CD8-positive, alpha-beta T cell (primary cell): ENCODE measurements at regions of chr1 and their contacts with region 1.

Region 1: DNA sequence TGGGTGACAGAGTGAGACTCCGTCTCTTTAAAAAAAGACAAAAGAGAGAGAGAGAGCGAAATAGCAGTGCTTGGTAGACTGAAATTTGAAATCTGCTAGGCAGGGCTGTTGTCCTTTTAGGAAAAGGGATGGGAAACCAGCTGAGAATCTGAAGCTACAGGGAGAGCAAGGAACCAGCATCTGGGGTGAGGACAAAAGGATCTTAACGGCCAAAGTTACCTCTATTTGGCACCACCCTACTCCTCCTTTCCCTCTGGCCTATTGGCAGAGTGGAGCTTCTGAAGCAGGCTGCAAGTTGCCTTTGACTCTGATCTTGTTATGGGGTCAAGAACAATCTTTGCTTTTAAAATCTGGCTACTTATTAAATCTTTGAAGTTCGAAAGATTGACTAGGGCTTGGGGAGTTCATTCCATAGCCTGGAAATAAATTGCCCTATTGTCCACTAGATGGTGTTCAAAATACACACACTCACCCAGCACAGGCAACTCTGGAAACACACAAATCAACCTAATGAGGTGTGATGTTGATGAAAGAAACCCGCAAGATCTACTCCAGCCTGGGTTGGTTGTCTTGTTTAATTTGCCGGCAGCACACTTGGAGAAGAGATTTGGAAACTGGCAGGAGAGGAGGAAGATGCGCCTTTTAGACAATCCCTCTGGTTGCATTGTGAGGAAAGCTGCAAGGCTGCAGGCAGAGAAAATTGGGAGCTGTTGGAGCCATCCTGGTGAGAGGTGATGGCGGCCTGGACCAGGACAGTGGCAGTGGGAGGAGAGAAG is 16.5 kb upstream of the PARP1 start:
- DNase-seq: peak in 3 of 9 experiments; percentile 21 to 75 (median 59)
- ATAC-seq: peak; percentile 54
- H3K4me3 ChIP-seq: no peak overlapping the region
- H3K4me3 Mint-ChIP-seq: no peak overlapping the region
- H3K27ac ChIP-seq: peak overlapping the region in 1 of 2 experiments; percentile 47
- H3K27ac Mint-ChIP-seq: no peak overlapping the region
- H3K4me1 ChIP-seq: peaks cover 27% of the 10 kb centered on the region
- H3K4me1 Mint-ChIP-seq: peaks cover 35% of the 10 kb centered on the region
- H3K27me3 ChIP-seq: no peaks in the 10 kb centered on the region
- H3K27me3 Mint-ChIP-seq: no peaks in the 10 kb centered on the region
- CTCF ChIP-seq: peak; percentile 47

Region 2: DNA sequence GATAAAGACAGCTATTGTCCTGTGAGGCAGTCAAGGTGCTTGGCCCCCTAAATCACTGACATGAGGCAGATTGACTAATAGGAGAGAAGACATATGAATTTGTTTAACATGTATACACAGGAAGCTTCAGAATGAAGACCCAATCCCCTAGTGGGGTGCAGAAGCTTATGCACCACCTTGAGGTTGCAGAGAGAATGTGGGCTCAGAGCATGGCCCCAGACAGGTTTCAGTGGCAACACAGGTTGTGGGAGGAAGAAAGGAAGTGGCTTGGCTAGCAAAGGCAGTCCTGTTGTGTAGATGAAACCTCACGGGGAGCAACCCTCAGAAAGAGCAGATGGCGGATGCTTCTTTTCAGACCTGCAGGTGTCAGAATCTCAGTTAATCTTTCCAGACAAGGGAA is 20.5 kb after region 1 on chr1:
- CTCF ChIA-PET with region 1: interaction called, 43 read pairs
- POLR2A ChIA-PET with region 1: interaction called, 17 read pairs
- intact Hi-C with region 1: loop called (anchors 1 to 2 kb)
- DNase-seq: peak; percentile 35 to 88 (median 68)
- ATAC-seq: peak; percentile 99
- H3K4me3 ChIP-seq: no peak overlapping the region
- H3K4me3 Mint-ChIP-seq: peak overlapping the region; percentile 12
- H3K27ac ChIP-seq: peak overlapping the region in 1 of 2 experiments; percentile 7
- H3K27ac Mint-ChIP-seq: peak overlapping the region; percentile 80
- H3K4me1 ChIP-seq: peaks cover 34% of the 10 kb centered on the region
- H3K4me1 Mint-ChIP-seq: peaks cover 35% of the 10 kb centered on the region
- H3K27me3 ChIP-seq: no peaks in the 10 kb centered on the region
- H3K27me3 Mint-ChIP-seq: no peaks in the 10 kb centered on the region
- CTCF ChIP-seq: peak; percentile 44

Region 3: GRCh38 chr1:226457307-226457712 is 32.9 kb after region 1 on chr1:
- CTCF ChIA-PET with region 1: interaction called, 14 read pairs
- POLR2A ChIA-PET with region 1: interaction called, 6 read pairs
- intact Hi-C with region 1: no loop called
- DNase-seq: peak; percentile 9 to 79 (median 60)
- ATAC-seq: peak; percentile 89
- H3K4me3 ChIP-seq: peak overlapping the region; percentile 25 to 56
- H3K4me3 Mint-ChIP-seq: peak overlapping the region; percentile 84
- H3K27ac ChIP-seq: no peak overlapping the region
- H3K27ac Mint-ChIP-seq: peak overlapping the region; percentile 77
- H3K4me1 ChIP-seq: peaks cover 17% of the 10 kb centered on the region
- H3K4me1 Mint-ChIP-seq: peaks cover 15% of the 10 kb centered on the region
- H3K27me3 ChIP-seq: no peaks in the 10 kb centered on the region
- H3K27me3 Mint-ChIP-seq: no peaks in the 10 kb centered on the region
- CTCF ChIP-seq: peak; percentile 51

Region 4: DNA sequence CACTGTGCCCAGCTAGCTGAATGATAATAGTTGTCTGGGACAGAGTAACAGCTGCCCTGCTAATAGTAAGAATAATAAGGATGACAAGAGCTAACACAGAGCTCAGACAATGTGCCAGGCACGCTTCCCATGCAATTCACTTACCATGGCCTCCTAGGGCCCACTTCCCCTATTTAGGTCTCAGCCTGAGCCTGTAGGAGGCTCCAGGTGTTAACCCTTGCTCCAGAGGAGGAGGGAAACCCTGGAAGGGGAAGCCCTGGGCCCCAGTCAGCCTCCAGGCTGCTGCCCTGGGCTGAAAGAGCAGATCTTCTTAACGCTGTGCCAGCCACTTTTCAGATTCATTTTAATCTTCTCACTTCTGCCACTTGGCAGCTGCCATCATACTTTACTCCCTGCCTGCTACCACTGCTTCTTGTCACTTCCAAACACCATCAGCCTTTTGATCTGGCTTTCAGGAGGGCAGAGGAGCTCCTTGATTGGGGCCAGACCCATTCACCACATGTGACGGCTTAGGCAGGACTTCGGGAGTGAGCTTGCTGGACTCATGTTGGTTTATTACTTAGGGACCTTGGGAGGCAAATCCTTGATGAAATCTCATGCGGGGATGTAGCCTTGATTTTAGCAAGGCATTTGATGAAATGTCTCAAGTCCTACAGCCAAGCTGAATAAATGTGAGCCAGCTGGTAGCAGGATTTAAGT is 50.2 kb after region 1 on chr1:
- CTCF ChIA-PET with region 1: no interaction called
- POLR2A ChIA-PET with region 1: no interaction called
- intact Hi-C with region 1: no loop called
- DNase-seq: no peak
- ATAC-seq: no peak
- H3K4me3 ChIP-seq: no peak overlapping the region
- H3K4me3 Mint-ChIP-seq: no peak overlapping the region
- H3K27ac ChIP-seq: no peak overlapping the region
- H3K27ac Mint-ChIP-seq: no peak overlapping the region
- H3K4me1 ChIP-seq: peaks cover 8% of the 10 kb centered on the region
- H3K4me1 Mint-ChIP-seq: peaks cover 10% of the 10 kb centered on the region
- H3K27me3 ChIP-seq: no peaks in the 10 kb centered on the region
- H3K27me3 Mint-ChIP-seq: peaks cover 4% of the 10 kb centered on the region
- CTCF ChIP-seq: no peak

Region 5: GRCh38 chr1:226547754-226548191 is 123.4 kb after region 1 on chr1:
- CTCF ChIA-PET with region 1: interaction called, 16 read pairs
- POLR2A ChIA-PET with region 1: interaction called, 4 read pairs
- intact Hi-C with region 1: loop called (anchors 1 to 2 kb)
- DNase-seq: peak; percentile 34 to 78 (median 56)
- ATAC-seq: peak; percentile 43
- H3K4me3 ChIP-seq: no peak overlapping the region
- H3K4me3 Mint-ChIP-seq: peak overlapping the region; percentile 58
- H3K27ac ChIP-seq: no peak overlapping the region
- H3K27ac Mint-ChIP-seq: no peak overlapping the region
- H3K4me1 ChIP-seq: peaks cover 20% of the 10 kb centered on the region
- H3K4me1 Mint-ChIP-seq: peaks cover 23% of the 10 kb centered on the region
- H3K27me3 ChIP-seq: peaks cover 6 to 18% of the 10 kb centered on the region in 2 experiments
- H3K27me3 Mint-ChIP-seq: peaks cover 25% of the 10 kb centered on the region
- CTCF ChIP-seq: peak; percentile 62

Region 6: DNA sequence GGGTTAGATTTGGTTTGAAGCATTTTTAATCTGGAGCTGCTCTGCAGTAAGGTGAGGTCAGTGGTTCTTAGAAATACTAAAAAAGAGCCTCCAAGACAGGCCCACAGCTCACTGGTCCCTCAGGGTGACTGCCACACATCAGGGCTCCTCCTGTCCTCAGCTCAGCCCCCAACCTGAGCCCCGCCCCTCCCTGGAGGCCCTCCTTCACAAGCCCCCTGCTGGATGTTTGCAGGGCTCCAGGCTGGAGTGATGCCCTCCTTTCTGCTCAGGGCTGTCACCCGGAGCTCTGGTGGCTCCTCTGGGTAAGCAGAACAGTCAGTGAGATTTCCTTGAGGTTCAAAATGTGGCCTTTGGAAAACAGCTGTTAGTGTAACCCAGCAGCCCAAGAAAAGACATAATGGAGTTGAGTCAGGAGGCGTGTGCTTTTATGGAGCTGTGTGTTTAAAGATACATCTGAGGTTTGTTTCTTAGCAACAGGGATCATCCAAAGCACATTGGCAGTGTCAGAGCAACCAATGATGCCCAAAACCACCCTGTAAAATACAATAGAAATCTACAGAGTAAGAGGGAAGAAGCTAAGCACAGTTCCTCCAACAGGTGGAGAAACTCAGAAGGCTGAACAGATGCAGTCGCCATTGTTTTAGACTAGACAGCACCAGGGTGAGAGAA is 145.6 kb after region 1 on chr1:
- CTCF ChIA-PET with region 1: interaction called, 13 read pairs
- POLR2A ChIA-PET with region 1: no interaction called
- intact Hi-C with region 1: loop called in 1 of 2 experiments (anchors 1 kb)
- DNase-seq: peak in 6 of 9 experiments; percentile 18 to 58 (median 46)
- ATAC-seq: peak; percentile 92
- H3K4me3 ChIP-seq: no peak overlapping the region
- H3K4me3 Mint-ChIP-seq: no peak overlapping the region
- H3K27ac ChIP-seq: no peak overlapping the region
- H3K27ac Mint-ChIP-seq: no peak overlapping the region
- H3K4me1 ChIP-seq: no peaks in the 10 kb centered on the region
- H3K4me1 Mint-ChIP-seq: no peaks in the 10 kb centered on the region
- H3K27me3 ChIP-seq: peaks cover 0 to 3% of the 10 kb centered on the region in 2 experiments
- H3K27me3 Mint-ChIP-seq: peaks cover 4% of the 10 kb centered on the region
- CTCF ChIP-seq: peak; percentile 28

Region 7: DNA sequence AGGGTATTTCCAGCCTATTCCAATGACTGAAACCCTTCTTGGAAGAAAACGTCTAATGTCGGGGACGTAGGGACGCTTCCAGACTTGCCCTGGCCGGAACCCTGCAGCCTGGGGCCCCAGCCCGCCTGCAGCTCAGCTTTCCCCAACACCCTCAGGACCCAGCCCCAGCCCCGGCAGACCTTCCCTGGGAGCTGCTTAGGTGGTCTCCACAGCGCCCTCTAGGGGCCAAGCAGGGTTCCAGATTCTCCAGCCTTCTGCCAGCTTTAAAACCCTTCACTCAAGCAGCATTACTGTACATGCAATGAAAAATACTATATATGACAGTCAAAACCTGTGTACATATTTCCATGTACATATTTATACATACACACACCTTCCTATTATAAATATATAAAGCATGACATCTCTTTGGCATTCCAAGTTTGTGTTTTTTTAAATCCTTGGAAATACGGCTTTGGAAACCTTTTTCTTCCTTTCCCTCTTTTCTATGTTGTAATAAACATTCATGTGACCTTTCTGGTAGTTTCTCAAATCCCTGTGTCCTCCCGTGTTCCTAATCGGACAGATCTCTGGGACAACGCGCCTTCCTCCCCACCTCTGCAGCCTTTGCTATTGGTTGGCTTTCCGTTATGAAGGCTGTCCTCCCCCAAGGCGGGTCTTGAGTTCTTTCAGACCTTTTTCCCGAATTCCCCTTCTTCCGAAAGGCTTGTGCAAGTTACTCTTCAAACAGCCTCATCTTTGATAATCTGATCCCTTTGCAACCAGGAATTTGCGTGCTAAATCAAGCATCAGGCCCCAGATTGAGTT is 184.5 kb after region 1 on chr1:
- CTCF ChIA-PET with region 1: interaction called, 43 read pairs
- POLR2A ChIA-PET with region 1: no interaction called
- intact Hi-C with region 1: loop called in 1 of 2 experiments (anchors 1 kb)
- DNase-seq: peak; percentile 33 to 81 (median 70)
- ATAC-seq: peak; percentile 77
- H3K4me3 ChIP-seq: no peak overlapping the region
- H3K4me3 Mint-ChIP-seq: no peak overlapping the region
- H3K27ac ChIP-seq: no peak overlapping the region
- H3K27ac Mint-ChIP-seq: no peak overlapping the region
- H3K4me1 ChIP-seq: no peaks in the 10 kb centered on the region
- H3K4me1 Mint-ChIP-seq: no peaks in the 10 kb centered on the region
- H3K27me3 ChIP-seq: peaks cover 0 to 4% of the 10 kb centered on the region in 2 experiments
- H3K27me3 Mint-ChIP-seq: peaks cover 3% of the 10 kb centered on the region
- CTCF ChIP-seq: peak; percentile 77